ENCODE measurements at regions of chr17 and their contacts with region 1.

Region 1: DNA sequence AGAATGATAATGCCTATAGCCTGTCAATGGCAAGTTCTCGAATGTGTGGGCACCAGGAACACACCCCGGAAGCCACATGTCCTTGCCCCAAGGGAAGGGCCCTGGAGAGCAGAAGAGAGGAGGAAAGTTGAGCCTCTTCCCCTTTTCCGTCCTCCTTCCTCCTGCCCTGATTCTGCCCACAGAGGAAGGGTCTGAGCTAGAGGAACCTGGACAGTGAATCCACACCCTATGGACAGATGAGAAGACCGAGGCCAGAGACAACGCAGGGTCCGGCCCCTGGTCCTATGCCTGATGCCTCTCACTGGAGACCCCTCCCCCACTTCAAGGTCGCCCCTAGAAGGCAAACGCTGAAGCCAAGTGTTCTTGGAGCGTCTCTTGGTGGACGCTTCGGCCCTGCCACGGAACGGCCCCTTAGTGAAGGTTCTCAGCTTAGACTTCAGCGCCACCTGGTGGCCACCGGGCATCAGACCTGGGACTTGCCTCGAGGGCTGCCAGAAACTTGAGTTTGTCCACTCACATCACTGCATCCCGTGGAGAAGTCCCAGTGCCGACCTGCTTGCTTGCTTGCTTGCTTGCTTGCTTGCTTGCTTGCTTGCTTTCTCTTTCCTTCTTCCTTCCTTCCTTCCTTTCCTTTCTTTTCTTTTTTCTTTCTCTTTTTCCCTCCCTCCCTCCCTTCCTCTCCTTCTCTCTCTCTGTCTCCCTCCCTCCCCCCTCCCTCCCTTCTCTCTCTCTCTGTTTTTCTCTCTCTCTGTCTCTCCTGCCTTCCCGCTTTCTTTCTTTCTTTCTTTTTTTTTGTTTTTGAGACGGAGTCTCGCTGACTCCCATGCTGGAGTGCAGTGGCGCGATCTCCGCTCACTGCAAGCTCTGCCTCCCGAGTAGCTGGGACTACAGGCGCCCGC is 20.6 kb upstream of the SPNS3 start:
- DNase-seq: peak; percentile 82
- H3K4me3 Mint-ChIP-seq: peak overlapping the region; percentile 50
- H3K27ac Mint-ChIP-seq: peak overlapping the region; percentile 59
- H3K4me1 Mint-ChIP-seq: peaks cover 5% of the 10 kb centered on the region
- H3K27me3 Mint-ChIP-seq: peaks cover 2% of the 10 kb centered on the region

Region 2: DNA sequence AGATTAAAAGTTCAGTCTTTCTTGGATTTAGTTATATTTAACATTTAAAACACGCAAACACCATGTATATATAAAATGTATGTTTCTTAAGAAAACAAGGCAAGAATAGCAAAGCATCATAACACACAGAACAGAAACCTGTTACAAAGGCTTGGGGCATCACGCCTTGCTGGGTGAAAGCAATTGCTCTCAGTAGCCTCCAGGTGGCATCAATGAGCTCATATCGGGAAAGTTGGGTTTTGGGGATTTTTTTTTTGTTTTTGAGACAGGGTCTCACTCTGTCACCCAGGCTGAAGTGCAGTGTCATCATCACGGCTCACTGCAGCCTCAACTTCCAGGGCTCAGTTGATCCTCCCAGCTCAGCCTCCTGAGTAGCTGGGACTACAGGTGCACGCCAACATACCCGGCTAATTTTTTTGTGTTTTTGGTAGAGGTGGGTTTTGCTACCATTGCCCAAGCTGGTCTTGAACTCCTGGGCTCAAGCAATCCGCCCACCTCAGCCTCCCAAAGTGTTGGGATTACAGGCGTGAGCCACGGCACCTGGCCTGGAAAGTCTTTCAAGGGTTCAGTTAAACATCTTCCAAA is 213.3 kb before region 1 on chr17:
- intact Hi-C with region 1: loop called (anchors 1 kb)
- DNase-seq: no peak
- H3K4me3 Mint-ChIP-seq: no peak overlapping the region
- H3K27ac Mint-ChIP-seq: no peak overlapping the region
- H3K4me1 Mint-ChIP-seq: peaks cover 17% of the 10 kb centered on the region
- H3K27me3 Mint-ChIP-seq: no peaks in the 10 kb centered on the region

Region 3: DNA sequence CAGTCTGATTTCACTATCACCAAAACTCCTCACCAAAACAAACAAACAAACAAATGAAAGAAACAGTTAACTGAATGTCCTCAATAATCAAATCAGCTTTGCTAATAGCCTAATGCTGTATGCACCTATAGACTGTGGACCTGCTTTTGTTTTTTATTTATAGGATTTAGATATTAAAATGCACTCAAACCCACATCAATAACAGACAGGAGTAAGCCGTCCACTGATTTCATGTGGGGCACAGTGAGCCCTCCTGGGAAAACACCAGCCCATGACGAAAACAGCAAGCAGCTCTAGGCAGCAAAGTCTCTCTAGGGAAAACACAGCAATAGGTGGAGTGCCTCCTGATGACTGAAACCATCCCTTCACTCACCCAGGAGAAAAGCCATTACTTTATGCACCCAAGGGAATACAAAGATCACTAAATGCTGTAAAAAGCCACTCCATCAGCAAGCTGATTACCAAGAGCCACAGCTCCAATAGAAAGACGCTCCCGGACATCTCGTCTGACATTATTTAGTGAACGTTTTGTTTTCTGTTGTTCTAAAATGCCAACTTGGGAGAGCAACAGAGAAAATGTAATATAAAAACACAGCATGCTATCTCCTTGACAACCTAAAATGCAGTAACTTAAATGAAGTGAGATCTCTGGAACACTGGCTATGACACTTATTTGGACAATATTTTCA is 197.2 kb before region 1 on chr17:
- intact Hi-C with region 1: loop called (anchors 1 kb)
- DNase-seq: no peak
- H3K4me3 Mint-ChIP-seq: no peak overlapping the region
- H3K27ac Mint-ChIP-seq: peak overlapping the region; percentile 15
- H3K4me1 Mint-ChIP-seq: peaks cover 21% of the 10 kb centered on the region
- H3K27me3 Mint-ChIP-seq: no peaks in the 10 kb centered on the region

Region 4: DNA sequence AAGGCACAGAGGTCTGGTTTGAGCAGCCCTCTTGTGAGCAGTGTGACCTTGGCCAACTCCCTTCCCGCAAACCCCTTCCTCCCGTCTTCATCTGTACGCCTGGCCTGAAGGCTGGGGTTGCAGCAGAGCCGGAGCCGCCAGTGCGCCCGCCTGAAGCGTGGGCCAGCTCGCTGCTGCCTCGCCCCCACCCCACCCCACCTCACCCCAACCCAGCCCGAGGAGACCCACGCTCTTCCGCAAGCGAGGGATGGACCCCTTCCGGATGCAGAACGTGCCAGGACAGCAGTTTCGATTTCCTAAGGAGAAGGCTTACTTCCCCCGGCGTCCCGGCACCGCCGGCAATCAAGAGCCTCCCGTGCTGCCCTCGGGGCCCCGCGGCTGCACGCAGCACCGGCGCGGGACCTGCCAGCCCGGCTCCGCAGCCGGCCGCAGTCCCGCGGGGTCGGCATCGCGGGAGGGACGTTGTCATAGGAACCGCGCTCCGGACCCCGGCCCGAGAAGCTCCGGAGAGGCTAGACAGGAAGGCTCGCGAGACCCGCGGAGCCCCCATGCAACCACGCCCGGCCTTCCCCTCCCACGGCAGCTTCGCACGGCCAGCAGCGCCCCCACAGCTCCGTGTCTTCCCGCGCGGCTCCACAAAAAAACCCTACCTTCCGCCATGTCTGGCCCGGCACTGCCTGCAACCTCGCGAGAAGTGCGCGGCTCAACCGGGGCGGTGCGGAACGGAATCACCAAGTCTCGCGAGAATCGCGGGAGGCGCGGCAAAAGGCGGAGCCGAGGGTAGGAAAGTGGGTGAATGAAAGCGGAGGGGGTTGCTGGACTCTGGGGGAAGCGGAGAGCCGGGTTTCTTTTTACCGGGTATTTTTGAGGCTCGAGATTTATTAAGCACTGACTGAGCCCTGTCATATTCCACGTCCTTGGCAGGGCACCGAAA is 149.6 kb before region 1 on chr17 and contains the start of gene ANKFY1:
- intact Hi-C with region 1: loop called (anchors 1 kb)
- DNase-seq: peak; percentile 98
- H3K4me3 Mint-ChIP-seq: peak within 1 kb of the TSS; percentile 98
- H3K27ac Mint-ChIP-seq: peak within 1 kb of the TSS; percentile 95
- H3K4me1 Mint-ChIP-seq: peaks cover 37% of the 10 kb centered on the region
- H3K27me3 Mint-ChIP-seq: no peaks in the 10 kb centered on the region
- total RNA-seq, gene ANKFY1: 53.8 and 60.1 TPM in 2 replicates

Region 5: DNA sequence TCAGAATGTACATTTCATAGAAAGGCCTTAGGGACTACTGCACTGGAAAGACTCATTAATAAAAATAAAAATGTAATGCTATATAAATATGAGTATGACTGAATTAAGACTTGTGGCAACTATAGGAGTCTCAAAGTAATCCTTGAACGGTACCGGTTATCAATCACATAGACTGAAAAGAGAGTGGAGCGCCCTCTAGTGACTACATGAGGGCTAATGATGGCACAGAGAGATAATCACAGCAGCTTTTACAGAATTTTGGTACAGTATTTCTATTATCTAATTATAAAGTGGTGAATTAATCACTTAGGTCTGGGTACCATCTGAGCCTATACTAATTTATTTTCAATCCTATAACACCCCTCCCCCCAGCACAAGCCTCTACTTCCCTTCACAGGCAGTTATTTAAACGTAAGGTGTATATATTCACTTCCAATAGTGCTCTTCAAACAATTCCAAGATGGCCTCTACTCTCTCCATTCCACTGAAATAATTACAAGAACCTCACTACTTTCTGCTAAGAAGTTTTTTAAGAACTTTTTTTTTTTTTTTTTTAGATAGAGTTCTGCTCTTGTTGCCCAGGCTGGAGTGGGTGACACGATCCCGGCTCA is 108.7 kb before region 1 on chr17:
- intact Hi-C with region 1: loop called (anchors 1 kb)
- DNase-seq: peak; percentile 12
- H3K4me3 Mint-ChIP-seq: no peak overlapping the region
- H3K27ac Mint-ChIP-seq: no peak overlapping the region
- H3K4me1 Mint-ChIP-seq: peaks cover 26% of the 10 kb centered on the region
- H3K27me3 Mint-ChIP-seq: no peaks in the 10 kb centered on the region

Region 6: GRCh38 chr17:4635823-4636375 is 222.7 kb after region 1 on chr17:
- intact Hi-C with region 1: no loop called
- DNase-seq: no peak
- H3K4me3 Mint-ChIP-seq: peak overlapping the region; percentile 52
- H3K27ac Mint-ChIP-seq: peak overlapping the region; percentile 0
- H3K4me1 Mint-ChIP-seq: peaks cover 23% of the 10 kb centered on the region
- H3K27me3 Mint-ChIP-seq: peaks cover 51% of the 10 kb centered on the region